WTC11 (cell line): ENCODE measurements at regions of chr17 and their contacts with region 1.

Region 1: GRCh38 chr17:79087428-79088143 is 13.0 kb downstream of the ENGASE start:
- DNase-seq: peak; percentile 89
- ATAC-seq: peak; percentile 85
- H3K4me3 Mint-ChIP-seq: no peak overlapping the region
- H3K27ac Mint-ChIP-seq: no peak overlapping the region
- H3K4me1 Mint-ChIP-seq: no peaks in the 10 kb centered on the region
- H3K27me3 Mint-ChIP-seq: no peaks in the 10 kb centered on the region
- CTCF ChIP-seq: peak; percentile 95

Region 2: GRCh38 chr17:78962345-78962983 is 125.1 kb before region 1 on chr17:
- CTCF ChIA-PET with region 1: no interaction called
- POLR2A ChIA-PET with region 1: no interaction called
- DNase-seq: no peak
- ATAC-seq: no peak
- H3K4me3 Mint-ChIP-seq: no peak overlapping the region
- H3K27ac Mint-ChIP-seq: no peak overlapping the region
- H3K4me1 Mint-ChIP-seq: no peaks in the 10 kb centered on the region
- H3K27me3 Mint-ChIP-seq: no peaks in the 10 kb centered on the region
- CTCF ChIP-seq: no peak

Region 3: GRCh38 chr17:78993241-78993956 is 94.2 kb before region 1 on chr17:
- CTCF ChIA-PET with region 1: no interaction called
- POLR2A ChIA-PET with region 1: no interaction called
- DNase-seq: peak; percentile 85
- ATAC-seq: peak; percentile 90
- H3K4me3 Mint-ChIP-seq: no peak overlapping the region
- H3K27ac Mint-ChIP-seq: no peak overlapping the region
- H3K4me1 Mint-ChIP-seq: no peaks in the 10 kb centered on the region
- H3K27me3 Mint-ChIP-seq: peaks cover 9% of the 10 kb centered on the region; the same call in 1 of the 2 replicates
- CTCF ChIP-seq: peak; percentile 61

Region 4: DNA sequence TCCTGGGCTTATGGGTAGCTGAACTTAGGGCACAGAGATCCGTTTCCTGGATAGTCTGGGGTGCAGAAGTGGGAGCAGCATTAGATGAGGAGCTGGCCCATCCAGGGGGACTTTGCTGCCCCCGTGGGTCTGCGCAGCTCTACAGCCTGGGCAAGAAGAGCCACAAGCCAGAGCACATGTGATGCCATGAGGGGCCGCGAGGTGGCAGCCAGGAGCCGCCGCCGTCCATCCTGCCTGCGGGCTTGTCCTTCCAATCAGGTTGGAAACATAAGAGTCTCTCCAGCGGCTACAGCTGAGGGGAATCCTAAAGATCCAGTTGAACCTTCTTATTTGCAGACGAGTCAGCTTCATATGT is 41.8 kb before region 1 on chr17:
- CTCF ChIA-PET with region 1: interaction called, 21 read pairs
- POLR2A ChIA-PET with region 1: interaction called, 3 read pairs
- DNase-seq: peak; percentile 84
- ATAC-seq: peak; percentile 86
- H3K4me3 Mint-ChIP-seq: no peak overlapping the region
- H3K27ac Mint-ChIP-seq: no peak overlapping the region
- H3K4me1 Mint-ChIP-seq: peaks cover 6% of the 10 kb centered on the region; the same call in 1 of the 2 replicates
- H3K27me3 Mint-ChIP-seq: peaks cover 7% of the 10 kb centered on the region
- CTCF ChIP-seq: peak; percentile 81

Region 5: DNA sequence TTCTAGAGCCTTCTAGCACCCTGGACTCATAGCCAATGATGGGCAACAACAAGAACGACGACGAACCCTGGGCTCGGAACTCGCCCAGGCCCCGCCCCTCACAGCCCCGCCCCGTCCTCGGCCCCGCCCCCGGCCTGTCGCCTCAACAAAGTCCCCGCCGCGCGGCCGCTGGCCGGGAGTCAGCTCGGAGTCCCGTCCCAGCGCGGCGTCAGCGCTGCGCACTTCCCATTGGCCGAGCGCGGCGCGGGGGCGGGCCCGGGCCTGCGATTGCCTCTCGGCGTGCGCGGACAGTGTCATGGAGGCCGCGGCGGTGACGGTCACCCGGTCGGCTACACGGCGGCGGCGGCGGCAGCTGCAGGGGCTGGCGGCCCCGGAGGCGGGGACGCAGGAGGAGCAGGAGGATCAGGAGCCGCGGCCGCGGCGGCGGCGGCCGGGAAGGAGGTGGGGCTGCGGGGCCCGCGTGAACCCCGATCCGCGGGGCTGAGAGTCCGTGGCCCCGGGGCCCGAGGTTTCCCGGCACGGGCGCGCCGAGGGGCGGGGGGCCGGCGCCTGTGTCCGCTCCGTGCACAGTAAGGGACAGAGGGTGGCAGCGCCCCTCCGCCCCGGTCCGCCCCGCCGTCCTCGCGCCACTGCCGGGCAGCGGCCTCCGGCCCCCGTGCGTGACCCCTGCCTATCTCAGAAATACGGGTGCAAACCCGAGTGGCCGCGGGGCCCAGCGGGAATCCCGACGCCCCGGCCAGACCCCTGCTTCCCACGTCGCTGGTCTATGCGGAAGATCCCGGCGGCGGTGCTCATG is 12.7 kb before region 1 on chr17 and contains the start of gene ENGASE:
- CTCF ChIA-PET with region 1: interaction called, 24 read pairs
- POLR2A ChIA-PET with region 1: no interaction called
- DNase-seq: peak; percentile 94
- ATAC-seq: peak; percentile 98
- H3K4me3 Mint-ChIP-seq: peak within 1 kb of the TSS; percentile 76
- H3K27ac Mint-ChIP-seq: peak within 1 kb of the TSS; percentile 72
- H3K4me1 Mint-ChIP-seq: peaks cover 7% of the 10 kb centered on the region
- H3K27me3 Mint-ChIP-seq: peaks cover 17% of the 10 kb centered on the region
- CTCF ChIP-seq: no peak
- total RNA-seq, gene ENGASE: 40.0 to 47.5 TPM (median 41.6 TPM) in 3 replicates

Region 6: DNA sequence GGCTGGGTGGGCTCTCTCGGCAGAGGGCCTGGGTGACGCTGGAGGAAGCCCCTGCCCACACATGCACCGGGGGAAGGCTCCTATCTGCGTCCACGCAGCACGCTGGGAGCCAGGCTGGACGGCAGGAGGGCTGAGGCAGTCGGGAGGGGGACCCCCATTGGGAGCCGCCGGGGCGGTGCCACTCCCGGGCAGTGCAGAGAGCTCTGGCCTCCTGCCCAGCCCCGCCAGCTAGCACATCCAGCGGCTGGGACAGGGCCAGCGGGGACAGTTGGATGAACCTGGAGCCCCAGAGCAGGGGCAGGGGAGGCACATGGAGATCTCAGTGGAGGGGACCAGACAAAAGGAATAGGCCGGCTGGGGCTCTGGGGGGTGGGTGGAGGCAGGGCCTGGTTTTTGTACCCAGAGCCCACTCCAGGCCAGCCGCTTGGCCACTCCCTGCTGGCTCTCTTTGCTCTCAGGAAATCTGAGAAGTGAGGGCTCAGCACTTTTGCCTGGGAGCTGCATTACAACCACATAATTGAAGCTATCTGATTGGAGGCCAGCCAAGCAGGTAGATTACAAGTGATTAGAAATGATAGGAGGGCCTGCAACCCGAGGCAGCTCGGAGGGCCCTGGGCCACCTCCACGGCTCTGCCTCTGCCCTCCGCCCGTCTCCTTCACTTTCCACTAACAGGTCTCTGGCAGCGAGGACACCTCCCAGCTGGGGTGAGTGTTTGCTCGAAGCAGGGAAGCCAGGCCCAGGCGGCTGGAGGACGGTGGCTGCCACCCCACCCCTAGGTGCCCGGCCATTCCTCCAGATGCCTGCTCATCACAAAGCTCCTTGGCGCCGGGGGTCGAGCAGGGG is 27.1 kb after region 1 on chr17:
- CTCF ChIA-PET with region 1: interaction called, 14 read pairs
- POLR2A ChIA-PET with region 1: no interaction called
- DNase-seq: no peak
- ATAC-seq: peak; percentile 49
- H3K4me3 Mint-ChIP-seq: no peak overlapping the region
- H3K27ac Mint-ChIP-seq: no peak overlapping the region
- H3K4me1 Mint-ChIP-seq: no peaks in the 10 kb centered on the region
- H3K27me3 Mint-ChIP-seq: no peaks in the 10 kb centered on the region
- CTCF ChIP-seq: no peak

Region 7: DNA sequence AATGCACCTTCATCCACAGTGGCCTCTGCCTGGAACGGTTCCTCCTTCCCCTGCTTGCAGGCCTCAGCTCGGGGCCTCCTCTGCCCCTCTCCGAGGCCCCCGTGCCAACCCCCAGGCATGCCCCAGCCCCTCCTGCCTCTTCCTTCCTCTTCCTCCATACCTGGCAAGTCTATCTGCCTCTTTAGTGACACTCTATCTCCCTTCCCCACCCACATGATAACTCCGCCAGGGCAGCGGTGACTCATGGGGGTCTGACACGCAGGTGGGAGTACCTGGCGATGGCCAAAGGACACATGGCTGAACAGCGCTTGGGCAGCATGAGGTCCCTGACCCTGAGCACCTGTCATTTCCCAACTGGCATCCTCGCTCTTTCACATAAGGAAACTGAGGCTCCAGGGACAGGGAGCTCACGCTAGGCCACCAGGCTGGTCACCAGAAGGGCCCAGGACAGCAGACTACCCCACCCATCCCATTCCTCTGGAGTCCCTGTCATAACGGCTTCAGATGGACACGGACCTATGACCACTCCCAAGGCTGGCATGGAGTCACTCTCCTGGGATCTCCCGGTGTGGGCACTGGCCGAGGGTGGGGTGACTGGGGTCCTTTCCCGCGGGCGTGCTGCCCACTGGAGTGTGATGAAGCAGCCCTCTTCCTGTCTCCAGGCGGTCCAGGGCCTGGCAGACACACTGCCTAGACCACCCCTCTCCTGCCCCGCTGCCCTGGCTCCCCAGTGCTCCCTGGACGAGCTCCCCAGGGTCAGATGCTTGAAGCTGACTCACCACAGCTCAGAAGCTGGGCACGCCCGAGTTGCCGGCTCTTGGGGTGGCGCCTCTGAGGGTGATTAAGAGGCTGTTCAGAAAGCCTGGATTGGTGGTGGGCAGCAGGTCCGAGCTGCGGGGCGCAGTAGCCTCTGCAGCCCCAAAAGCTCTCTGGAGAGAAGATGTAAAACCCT is 87.6 kb after region 1 on chr17:
- CTCF ChIA-PET with region 1: interaction called, 12 read pairs
- POLR2A ChIA-PET with region 1: no interaction called
- DNase-seq: no peak
- ATAC-seq: no peak
- H3K4me3 Mint-ChIP-seq: no peak overlapping the region
- H3K27ac Mint-ChIP-seq: no peak overlapping the region
- H3K4me1 Mint-ChIP-seq: peaks cover 8% of the 10 kb centered on the region; the same call in 1 of the 2 replicates
- H3K27me3 Mint-ChIP-seq: no peaks in the 10 kb centered on the region; the same call in 1 of the 2 replicates
- CTCF ChIP-seq: no peak

Region 8: GRCh38 chr17:79400989-79401703 is 313.6 kb after region 1 on chr17:
- CTCF ChIA-PET with region 1: interaction called, 34 read pairs
- POLR2A ChIA-PET with region 1: no interaction called
- DNase-seq: peak; percentile 79
- ATAC-seq: peak; percentile 83
- H3K4me3 Mint-ChIP-seq: peak overlapping the region; percentile 71
- H3K27ac Mint-ChIP-seq: no peak overlapping the region
- H3K4me1 Mint-ChIP-seq: peaks cover 20% of the 10 kb centered on the region
- H3K27me3 Mint-ChIP-seq: peaks cover 28% of the 10 kb centered on the region
- CTCF ChIP-seq: peak; percentile 75

Region 9: GRCh38 chr17:79497777-79498348 is 410.3 kb after region 1 on chr17:
- CTCF ChIA-PET with region 1: no interaction called
- POLR2A ChIA-PET with region 1: no interaction called
- DNase-seq: no peak
- ATAC-seq: no peak
- H3K4me3 Mint-ChIP-seq: no peak overlapping the region
- H3K27ac Mint-ChIP-seq: no peak overlapping the region
- H3K4me1 Mint-ChIP-seq: peaks cover 10% of the 10 kb centered on the region
- H3K27me3 Mint-ChIP-seq: no peaks in the 10 kb centered on the region; the same call in none of the 2 replicates
- CTCF ChIP-seq: no peak